Dorsolateral prefrontal cortex (tissue), 120 donors: ENCODE measurements at regions of chr9 and their contacts with region 1.

Region 1: DNA sequence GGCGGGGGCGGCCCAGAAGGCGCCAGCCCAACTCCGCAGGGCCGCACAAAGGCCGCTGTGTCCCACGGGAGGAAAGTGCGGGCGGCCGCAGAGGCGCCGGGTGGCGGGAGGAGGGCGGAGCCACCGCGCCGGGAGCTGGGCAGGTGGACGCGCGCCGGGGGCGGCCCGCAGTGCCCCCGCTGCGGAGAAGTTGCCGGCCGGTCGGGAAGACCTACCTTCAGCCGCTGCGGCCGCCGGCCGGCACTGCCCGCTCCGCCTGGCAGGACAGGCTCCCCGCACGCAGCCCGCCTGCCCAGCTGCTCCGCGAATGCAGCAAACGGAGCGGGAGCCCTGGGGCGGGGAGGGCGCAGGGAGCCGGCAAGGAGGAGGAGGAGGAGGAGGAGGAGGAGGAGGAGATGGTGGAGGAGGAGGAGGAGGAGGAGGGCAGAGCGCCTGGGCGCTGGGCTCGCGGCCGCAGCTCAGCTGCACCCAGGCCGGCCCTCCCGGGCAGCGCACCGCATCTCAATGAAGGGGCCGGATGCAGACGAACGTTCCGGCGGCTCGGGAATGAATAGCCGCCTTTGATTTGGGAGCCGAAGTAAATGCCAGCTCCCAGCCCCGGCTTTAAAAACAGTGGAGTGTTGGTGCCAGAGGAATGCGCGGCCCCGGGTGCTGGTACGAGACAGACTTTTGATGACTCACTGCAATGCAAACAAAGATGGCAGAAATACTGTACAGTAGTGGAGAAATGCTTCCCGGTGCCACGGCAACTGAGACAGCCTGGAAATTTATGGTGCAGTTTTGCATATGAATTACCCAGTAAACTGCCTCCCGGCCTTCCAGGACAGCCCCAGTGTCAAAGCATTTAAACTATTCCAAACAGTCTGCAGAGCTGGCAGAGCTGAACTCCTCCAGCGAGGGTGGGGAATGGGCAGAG is 43.3 kb downstream of the NACC2 start:
- DNase-seq: peak; percentile 65 to 93 (median 90)
- H3K4me3 ChIP-seq: peak overlapping the region; percentile 50 to 82 (median 72)
- H3K27ac ChIP-seq: peak overlapping the region; percentile 68 to 99 (median 97)
- H3K27me3 ChIP-seq: no peaks in the 10 kb centered on the region
- CTCF ChIP-seq: peak in 3 of 56 donors; percentile 1 to 26 (median 5)

Region 2: GRCh38 chr9:135971892-135972291 is 79.9 kb before region 1 on chr9:
- intact Hi-C with region 1: loop called (anchors 5 kb)
- DNase-seq: no peak
- H3K4me3 ChIP-seq: no peak overlapping the region
- H3K27ac ChIP-seq: no peak overlapping the region
- H3K27me3 ChIP-seq: no peaks in the 10 kb centered on the region
- CTCF ChIP-seq: no peak

Region 3: DNA sequence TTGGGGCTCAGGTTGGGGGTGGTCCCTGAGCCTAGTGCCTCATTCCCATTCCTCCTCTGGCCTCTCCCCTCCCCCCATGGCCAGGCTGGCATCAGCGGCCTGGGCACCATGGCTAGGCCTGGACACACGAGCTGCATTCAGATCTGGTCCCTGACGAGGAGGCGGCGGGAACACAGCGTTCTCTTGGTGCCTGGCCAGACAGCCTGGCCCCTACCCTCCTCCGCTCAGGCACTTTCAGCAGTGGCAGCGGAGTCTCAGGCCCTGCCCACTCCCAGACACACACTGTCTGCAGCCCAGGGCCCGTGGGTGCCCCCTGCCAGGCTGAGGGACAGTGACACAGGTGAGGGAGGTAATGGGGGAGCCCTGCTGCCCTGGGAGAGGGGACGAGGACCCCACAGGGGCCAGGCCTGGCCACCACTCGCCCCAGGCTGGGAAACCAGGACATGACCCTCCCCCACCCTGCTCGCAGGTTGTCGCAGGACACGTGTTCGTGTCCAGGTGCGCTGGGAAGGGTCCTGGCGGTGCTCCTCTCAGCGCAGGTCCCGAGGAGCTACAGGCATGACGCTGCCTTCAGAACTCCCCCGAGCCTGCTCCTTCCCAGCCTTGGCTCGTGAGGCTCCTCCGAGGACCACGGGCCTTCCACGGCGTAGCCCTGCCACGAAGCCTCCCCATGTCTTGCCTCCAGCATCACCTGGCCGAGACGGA is 70.7 kb before region 1 on chr9:
- intact Hi-C with region 1: loop called in 1 of 2 experiments (anchors 5 kb)
- DNase-seq: peak in 9 of 10 donors; percentile 84 to 92 (median 90)
- H3K4me3 ChIP-seq: peak overlapping the region in 2 of 59 donors; percentile 4 to 27
- H3K27ac ChIP-seq: peak overlapping the region in 57 of 59 donors; percentile 43 to 93 (median 80)
- H3K27me3 ChIP-seq: peaks cover 0 to 9% (median 0%) of the 10 kb centered on the region in 45 donors
- CTCF ChIP-seq: peak in 6 of 56 donors; percentile 8 to 45 (median 15)

Region 4: DNA sequence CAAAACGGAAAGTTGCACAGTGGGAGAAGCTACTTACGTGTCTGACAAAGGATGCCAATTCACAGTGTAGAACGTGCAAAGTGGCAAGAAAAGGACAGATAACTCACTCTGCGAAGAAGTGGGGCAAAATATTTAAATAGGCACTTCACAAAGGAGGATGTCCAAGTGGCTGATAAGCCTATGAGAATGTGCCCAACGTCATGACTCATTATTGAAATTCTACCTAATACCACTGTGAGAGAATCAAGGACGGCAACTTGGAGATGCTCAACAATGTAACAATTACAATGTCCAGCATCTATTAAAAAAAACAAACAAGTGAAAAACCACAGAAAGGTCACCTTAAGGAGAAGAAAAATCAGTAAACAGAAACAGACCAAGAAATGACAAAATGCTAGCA is 15.7 kb before region 1 on chr9:
- intact Hi-C with region 1: loop called in 1 of 2 experiments (anchors 1 kb)
- DNase-seq: no peak
- H3K4me3 ChIP-seq: no peak overlapping the region
- H3K27ac ChIP-seq: peak overlapping the region in 1 of 59 donors; percentile 26
- H3K27me3 ChIP-seq: no peaks in the 10 kb centered on the region
- CTCF ChIP-seq: no peak

Region 5: GRCh38 chr9:136089697-136090045 is 37.9 kb after region 1 on chr9:
- intact Hi-C with region 1: loop called (anchors 5 kb)
- DNase-seq: no peak
- H3K4me3 ChIP-seq: peak overlapping the region in 2 of 59 donors; percentile 15 to 30
- H3K27ac ChIP-seq: peak overlapping the region in 42 of 59 donors; percentile 6 to 94 (median 65)
- H3K27me3 ChIP-seq: no peaks in the 10 kb centered on the region
- CTCF ChIP-seq: peak in 53 of 56 donors; percentile 23 to 73 (median 50)

Region 6: DNA sequence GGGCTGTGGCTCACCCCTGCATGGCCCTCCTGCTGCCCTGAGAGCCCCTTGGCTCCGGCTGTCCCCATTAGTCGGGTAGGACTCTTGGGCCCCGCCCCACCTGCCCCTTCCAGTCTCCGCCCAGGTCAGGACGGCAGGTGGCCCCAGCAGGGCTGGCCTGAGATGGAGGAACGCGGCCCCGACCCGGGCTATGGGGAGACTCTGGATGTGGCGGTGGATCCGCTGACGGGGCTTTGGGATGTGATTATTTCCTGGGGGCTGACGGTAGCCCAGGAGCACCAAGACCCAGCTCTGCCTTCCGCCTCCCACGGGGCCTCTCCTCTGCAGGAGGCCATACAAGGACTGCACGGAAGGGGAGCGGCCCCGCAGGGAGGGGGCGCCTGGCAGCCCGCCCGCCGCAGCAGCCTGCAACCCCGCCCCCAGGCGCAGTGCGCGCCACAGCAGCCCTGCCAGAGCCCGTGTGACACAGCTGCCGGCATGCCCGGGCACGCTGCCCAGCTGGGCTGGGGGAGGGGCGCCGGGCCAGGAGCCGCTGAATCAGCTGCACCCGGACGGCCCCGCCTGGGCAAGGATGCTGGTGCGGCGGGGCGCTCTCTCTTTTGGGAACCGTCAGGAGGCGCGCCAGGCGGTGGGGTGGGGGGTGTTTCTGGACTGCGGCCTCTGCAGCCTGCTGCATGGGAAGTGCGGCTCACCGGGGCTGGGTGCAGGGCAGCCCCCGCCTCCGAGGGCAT is 57.7 kb after region 1 on chr9:
- intact Hi-C with region 1: loop called (anchors 2 to 5 kb)
- DNase-seq: peak; percentile 72 to 97 (median 91)
- H3K4me3 ChIP-seq: peak overlapping the region; percentile 32 to 72 (median 53)
- H3K27ac ChIP-seq: peak overlapping the region; percentile 29 to 92 (median 80)
- H3K27me3 ChIP-seq: no peaks in the 10 kb centered on the region
- CTCF ChIP-seq: peak in 42 of 56 donors; percentile 9 to 64 (median 36)

Region 7: GRCh38 chr9:136147890-136148714 is 96.3 kb after region 1 on chr9:
- intact Hi-C with region 1: no loop called
- DNase-seq: no peak
- H3K4me3 ChIP-seq: no peak overlapping the region
- H3K27ac ChIP-seq: no peak overlapping the region
- H3K27me3 ChIP-seq: peaks cover 0 to 55% (median 19%) of the 10 kb centered on the region in 45 donors
- CTCF ChIP-seq: no peak

Region 8: GRCh38 chr9:136748666-136749611 is 697.2 kb after region 1 on chr9:
- intact Hi-C with region 1: no loop called
- DNase-seq: no peak
- H3K4me3 ChIP-seq: no peak overlapping the region
- H3K27ac ChIP-seq: no peak overlapping the region
- H3K27me3 ChIP-seq: peaks cover 0 to 10% (median 0%) of the 10 kb centered on the region in 45 donors
- CTCF ChIP-seq: no peak